Heart right ventricle (tissue), 16 donors: ENCODE measurements at regions of chr7 and their contacts with region 1.

Region 1: DNA sequence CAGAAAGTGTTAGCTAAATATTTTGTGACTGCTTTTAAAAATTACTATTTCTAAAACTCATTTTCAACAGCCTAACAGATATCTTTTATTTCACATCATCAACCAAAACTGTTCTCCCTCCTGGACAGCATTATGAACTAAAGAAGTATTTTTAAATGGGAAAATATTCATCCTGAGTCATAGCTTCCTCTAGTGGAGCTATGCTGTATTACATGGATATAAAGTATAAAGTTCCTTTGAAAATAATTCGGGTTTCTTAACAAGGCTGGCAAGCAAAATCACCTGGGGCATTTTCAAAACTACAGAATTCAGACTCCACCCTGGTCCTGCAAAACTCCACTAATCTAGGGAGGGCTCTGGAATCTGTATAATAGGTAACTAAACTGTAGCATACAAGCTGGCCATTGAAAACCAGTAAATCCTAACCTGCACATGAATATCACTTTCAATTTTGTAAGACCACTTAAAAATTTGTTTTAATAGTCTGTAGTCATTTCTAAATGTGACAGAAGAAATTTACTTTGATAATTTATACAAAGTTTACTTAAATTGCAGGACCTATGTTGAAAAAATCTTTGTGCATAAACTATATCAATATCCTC is 53.5 kb downstream of the SCIN start:
- DNase-seq: no peak
- ATAC-seq: no peak
- H3K4me3 ChIP-seq: no peak overlapping the region
- H3K27ac ChIP-seq: no peak overlapping the region
- H3K4me1 ChIP-seq: peaks cover 0 to 9% (median 0%) of the 10 kb centered on the region in 9 donors
- H3K27me3 ChIP-seq: no peaks in the 10 kb centered on the region
- CTCF ChIP-seq: peak; percentile 35 to 74 (median 72)

Region 2: DNA sequence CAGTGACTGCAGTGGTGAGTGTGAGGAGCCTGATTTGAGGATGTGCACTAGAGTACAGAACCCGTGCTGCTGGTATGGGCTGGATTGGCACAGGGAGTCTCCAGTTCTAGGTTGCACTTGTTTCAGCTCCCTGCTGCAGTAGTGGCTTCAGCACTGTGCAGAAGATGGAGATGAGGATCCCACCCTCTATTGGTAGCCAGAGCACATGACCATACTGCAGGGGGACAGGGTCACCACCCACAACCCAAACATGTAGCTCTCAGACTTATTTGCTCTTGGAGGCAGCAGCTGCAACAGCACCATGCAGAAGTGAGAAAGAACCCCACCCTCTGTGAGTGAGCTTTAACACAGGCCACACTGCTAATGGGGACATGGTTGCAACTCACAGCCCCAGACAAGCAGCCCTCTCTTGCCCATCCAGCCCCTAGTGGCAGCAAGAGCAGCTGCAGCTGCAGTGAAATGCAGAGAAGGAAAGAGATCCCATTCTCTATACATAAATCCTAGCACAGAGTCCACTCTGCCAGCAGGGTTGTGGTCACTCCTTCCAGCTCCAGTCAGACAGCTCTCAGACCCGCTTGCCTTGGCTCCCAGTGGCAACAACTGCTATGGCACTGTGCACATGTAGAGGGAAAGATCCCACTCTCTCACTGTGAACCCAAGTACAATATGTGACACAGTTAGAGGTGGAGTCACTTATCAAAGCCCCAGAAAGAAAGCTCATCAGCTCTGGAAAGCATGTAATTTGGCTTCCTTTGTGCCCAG is 104.9 kb before region 1 on chr7:
- intact Hi-C with region 1: loop called in 6 of 10 experiments (anchors 2 to 10 kb)
- DNase-seq: no peak
- ATAC-seq: peak in 1 of 8 donors; percentile 8
- H3K4me3 ChIP-seq: no peak overlapping the region
- H3K27ac ChIP-seq: no peak overlapping the region
- H3K4me1 ChIP-seq: no peaks in the 10 kb centered on the region
- H3K27me3 ChIP-seq: no peaks in the 10 kb centered on the region
- CTCF ChIP-seq: peak in 2 of 9 donors; percentile 17 to 36

Region 3: DNA sequence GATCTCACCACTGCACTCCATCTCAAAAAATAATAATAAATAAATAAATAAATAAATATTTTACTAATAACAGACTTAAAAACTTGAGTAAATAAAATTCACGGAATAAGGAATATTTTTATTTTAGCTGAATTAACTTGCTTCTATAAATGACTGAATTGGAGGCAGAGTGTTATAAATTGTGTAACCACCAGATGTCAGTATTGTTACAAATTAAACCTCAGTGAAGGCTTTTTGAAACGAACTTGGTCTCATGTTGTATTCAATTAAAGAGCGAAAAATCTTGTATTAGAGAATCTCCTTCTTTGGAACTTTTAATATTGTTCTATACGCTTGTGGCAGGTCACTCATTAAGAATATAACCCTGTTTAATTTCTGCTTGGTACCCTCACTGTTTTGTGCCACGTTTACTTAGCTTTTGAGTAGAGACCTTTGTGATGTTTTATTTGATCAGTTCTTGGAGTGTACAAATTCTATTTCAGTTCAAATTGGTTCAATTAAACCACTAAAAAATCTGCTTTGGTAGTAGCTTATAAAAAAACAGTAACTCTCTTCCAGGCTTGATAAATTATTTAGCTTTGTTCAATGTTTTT is 99.1 kb before region 1 on chr7:
- intact Hi-C with region 1: loop called in 8 of 10 experiments (anchors 2 to 10 kb)
- DNase-seq: no peak
- ATAC-seq: no peak
- H3K4me3 ChIP-seq: no peak overlapping the region
- H3K27ac ChIP-seq: no peak overlapping the region
- H3K4me1 ChIP-seq: no peaks in the 10 kb centered on the region
- H3K27me3 ChIP-seq: peaks cover 0 to 5% (median 0%) of the 10 kb centered on the region in 7 donors
- CTCF ChIP-seq: peak; percentile 38 to 77 (median 70)

Region 4: GRCh38 chr7:12539681-12540080 is 84.3 kb before region 1 on chr7:
- intact Hi-C with region 1: loop called in 1 of 10 experiments (anchors 10 kb)
- DNase-seq: no peak
- ATAC-seq: no peak
- H3K4me3 ChIP-seq: no peak overlapping the region
- H3K27ac ChIP-seq: no peak overlapping the region
- H3K4me1 ChIP-seq: no peaks in the 10 kb centered on the region
- H3K27me3 ChIP-seq: no peaks in the 10 kb centered on the region
- CTCF ChIP-seq: no peak